ENCODE measurements at regions of chr5 and their contacts with region 1.

Region 1: DNA sequence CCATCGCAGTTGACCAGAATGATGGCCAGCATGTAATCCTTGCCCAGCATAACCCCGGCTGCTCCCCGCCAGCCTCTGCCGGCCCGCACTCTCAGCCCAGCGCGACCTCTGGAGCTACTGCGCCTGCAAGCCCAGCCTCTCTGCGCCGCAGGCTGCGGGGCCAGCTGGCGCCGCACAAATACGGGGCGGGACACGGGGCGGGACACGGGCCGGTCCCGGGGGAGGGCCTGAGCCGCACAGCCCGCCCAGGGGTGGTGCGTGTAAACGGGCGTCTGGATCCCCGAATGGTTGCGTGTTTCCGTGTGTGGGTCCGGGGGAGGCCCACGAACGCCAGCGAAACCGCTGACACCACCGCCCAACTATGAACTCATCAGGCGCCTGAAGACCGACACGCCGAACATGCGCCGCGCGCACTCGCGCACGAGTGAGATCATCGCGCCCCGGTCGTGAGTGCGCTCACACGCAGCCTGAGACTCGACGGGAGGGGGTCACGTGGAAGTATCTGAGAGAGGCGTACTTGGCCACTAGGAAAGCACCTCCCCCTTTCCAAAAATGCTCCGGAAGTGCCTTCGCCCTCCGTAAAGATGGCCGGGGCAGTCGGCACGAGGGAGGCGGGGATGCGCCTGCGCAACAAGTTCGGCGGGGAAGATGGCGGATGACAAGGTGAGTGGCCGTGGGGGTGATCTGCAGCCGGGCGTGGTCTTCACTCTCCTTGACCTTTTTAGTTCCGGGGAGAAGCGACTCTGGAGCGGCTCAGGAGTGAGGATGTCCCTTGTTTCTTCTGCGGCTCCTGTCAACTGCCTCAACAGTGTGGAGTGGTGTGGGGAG is at the starts of genes APBB3 and SLC35A4:
- DNase-seq: peak; percentile 99
- H3K4me3 ChIP-seq: peak within 1 kb of the TSS; percentile 60 to 81 (median 74)
- H3K27ac ChIP-seq: peak within 1 kb of the TSS; percentile 92 to 97 (median 96)
- H3K4me1 ChIP-seq: peaks cover 0 to 54% (median 46%) of the 10 kb centered on the region in 4 donors
- H3K27me3 ChIP-seq: no peaks in the 10 kb centered on the region
- CTCF ChIP-seq: no peak
- EP300 ChIP-seq: peak in 2 of 4 donors; percentile 23 to 77
- POLR2A ChIP-seq: peak; percentile 86 to 88
- total RNA-seq, gene APBB3: 13.5 to 25.9 (median 19.3) TPM
- total RNA-seq, gene SLC35A4: 14.2 to 19.7 (median 17.9) TPM

Region 2: GRCh38 chr5:140126315-140127012 is 437.9 kb before region 1 on chr5:
- intact Hi-C with region 1: no loop called
- DNase-seq: no peak
- H3K4me3 ChIP-seq: no peak overlapping the region
- H3K27ac ChIP-seq: no peak overlapping the region
- H3K4me1 ChIP-seq: peaks cover 0 to 21% (median 12%) of the 10 kb centered on the region in 4 donors
- H3K27me3 ChIP-seq: no peaks in the 10 kb centered on the region
- CTCF ChIP-seq: no peak
- EP300 ChIP-seq: no peak
- POLR2A ChIP-seq: no peak

Region 3: GRCh38 chr5:140639148-140639979 is 75.0 kb after region 1 on chr5 and contains the start of gene TMCO6:
- intact Hi-C with region 1: loop called (anchors 2 kb)
- DNase-seq: peak; percentile 99
- H3K4me3 ChIP-seq: peak within 1 kb of the TSS; percentile 66 to 77 (median 71)
- H3K27ac ChIP-seq: peak within 1 kb of the TSS; percentile 88 to 91 (median 90)
- H3K4me1 ChIP-seq: peaks cover 0 to 18% (median 12%) of the 10 kb centered on the region in 4 donors
- H3K27me3 ChIP-seq: no peaks in the 10 kb centered on the region
- CTCF ChIP-seq: peak; percentile 32 to 63 (median 59)
- EP300 ChIP-seq: peak in 1 of 4 donors; percentile 17
- POLR2A ChIP-seq: peak; percentile 21 to 59
- total RNA-seq, gene TMCO6: 27.3 to 40.2 (median 35.6) TPM